ENCODE measurements at regions of chr1 and their contacts with region 1.

Region 1: GRCh38 chr1:9867408-9868243 is 42.4 kb downstream of the CTNNBIP1 start:
- DNase-seq: peak; percentile 86
- ATAC-seq: peak; percentile 93
- H3K4me3 ChIP-seq: no peak overlapping the region
- H3K27ac ChIP-seq: no peak overlapping the region
- H3K4me1 ChIP-seq: no peaks in the 10 kb centered on the region
- H3K27me3 ChIP-seq: no peaks in the 10 kb centered on the region
- CTCF ChIP-seq: peak; percentile 99

Region 2: DNA sequence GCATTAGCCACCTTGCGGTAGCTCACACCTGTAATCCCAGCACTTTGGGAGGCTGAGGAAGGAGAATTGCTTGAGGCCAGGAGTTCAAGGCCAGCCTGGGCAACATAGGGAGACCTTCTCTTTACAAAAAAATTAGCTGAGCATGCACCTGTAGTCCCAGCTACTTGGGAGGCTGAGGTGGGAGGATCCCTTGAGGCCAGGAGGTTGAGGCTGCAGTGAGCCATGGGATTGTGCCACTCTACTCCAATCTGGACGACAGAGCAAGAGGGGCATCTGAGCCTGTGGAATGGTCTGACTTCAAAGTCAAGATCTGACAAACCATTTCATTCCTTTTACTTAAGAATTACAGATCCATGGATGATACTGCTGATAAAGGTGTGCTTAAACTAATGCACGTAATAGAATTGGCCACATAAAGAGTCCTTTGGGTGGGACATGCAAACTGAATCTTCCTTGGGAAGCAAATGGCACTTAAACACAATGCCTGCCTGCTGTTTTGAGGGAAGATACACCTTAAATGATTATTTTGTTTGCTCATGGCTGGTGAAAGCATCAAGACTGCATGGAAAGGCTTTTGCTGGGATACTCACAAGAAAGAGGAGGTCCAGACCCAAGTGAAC is 281.4 kb before region 1 on chr1:
- intact Hi-C with region 1: no loop called
- DNase-seq: peak; percentile 5
- ATAC-seq: no peak
- H3K4me3 ChIP-seq: no peak overlapping the region
- H3K27ac ChIP-seq: no peak overlapping the region
- H3K4me1 ChIP-seq: peaks cover 14% of the 10 kb centered on the region
- H3K27me3 ChIP-seq: no peaks in the 10 kb centered on the region
- CTCF ChIP-seq: no peak

Region 3: GRCh38 chr1:9629445-9630201 is 238.0 kb before region 1 on chr1:
- intact Hi-C with region 1: loop called (anchors 10 kb)
- DNase-seq: peak; percentile 87
- ATAC-seq: peak; percentile 74
- H3K4me3 ChIP-seq: peak overlapping the region; percentile 34
- H3K27ac ChIP-seq: peak overlapping the region; percentile 71
- H3K4me1 ChIP-seq: no peaks in the 10 kb centered on the region
- H3K27me3 ChIP-seq: no peaks in the 10 kb centered on the region
- CTCF ChIP-seq: no peak

Region 4: DNA sequence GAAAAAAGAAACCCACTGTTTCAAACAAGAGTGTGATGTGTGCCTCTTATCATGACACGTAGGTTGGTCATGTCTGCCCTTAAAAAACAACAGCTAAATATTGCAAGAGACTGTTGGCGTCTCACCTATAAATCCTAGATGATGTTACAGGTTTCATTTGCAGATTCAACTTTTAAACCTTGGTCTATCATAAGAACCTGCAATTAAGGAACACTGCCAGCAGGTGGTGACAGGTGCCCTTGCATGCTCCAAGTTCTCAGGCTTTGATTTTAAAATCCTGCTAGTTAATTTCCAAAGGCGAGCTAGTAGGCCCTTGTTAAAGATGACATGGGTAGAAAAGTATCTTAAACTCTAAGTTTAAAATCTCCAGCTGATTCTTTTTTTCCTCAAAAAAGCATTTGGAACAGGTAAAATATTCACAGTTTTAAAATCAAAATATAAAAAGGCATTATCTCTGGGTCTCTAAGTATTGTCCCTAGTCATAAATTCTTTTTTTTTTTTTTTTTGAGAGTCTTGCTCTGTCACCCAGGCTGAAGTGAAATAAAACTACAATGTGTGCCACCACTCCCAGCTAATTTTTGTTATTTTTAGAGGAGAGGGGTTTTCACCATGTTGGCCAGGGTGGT is 83.0 kb before region 1 on chr1:
- intact Hi-C with region 1: loop called (anchors 5 kb)
- DNase-seq: no peak
- ATAC-seq: peak; percentile 77
- H3K4me3 ChIP-seq: no peak overlapping the region
- H3K27ac ChIP-seq: no peak overlapping the region
- H3K4me1 ChIP-seq: no peaks in the 10 kb centered on the region
- H3K27me3 ChIP-seq: no peaks in the 10 kb centered on the region
- CTCF ChIP-seq: peak; percentile 69

Region 5: GRCh38 chr1:9922342-9922741 is 54.7 kb after region 1 on chr1:
- intact Hi-C with region 1: no loop called
- DNase-seq: no peak
- ATAC-seq: peak; percentile 51
- H3K4me3 ChIP-seq: no peak overlapping the region
- H3K27ac ChIP-seq: no peak overlapping the region
- H3K4me1 ChIP-seq: no peaks in the 10 kb centered on the region
- H3K27me3 ChIP-seq: no peaks in the 10 kb centered on the region
- CTCF ChIP-seq: no peak

Measured in upper lobe of right lung (tissue), 1 donor.